HCT116 (cell line): ENCODE measurements at regions of chr19 and their contacts with region 1.

Region 1: GRCh38 chr19:57389730-57390598 is at the start of gene ZNF548:
- DNase-seq: peak; percentile 98
- ATAC-seq: peak; percentile 99
- H3K4me3 ChIP-seq: peak within 1 kb of the TSS; percentile 73 to 85
- H3K27ac ChIP-seq: peak within 1 kb of the TSS; percentile 61
- H3K4me1 ChIP-seq: peaks cover 6 to 16% of the 10 kb centered on the region in 2 experiments; a peak in 2 of 4 replicates
- H3K27me3 ChIP-seq: no peaks in the 10 kb centered on the region
- CTCF ChIP-seq: 0 out of 6 replicates have a peak, but pooled peaks of 1 of the 3 experiments have one; percentile 11
- POLR2A ChIP-seq: peak; percentile 39
- RAD21 ChIP-seq: no peak
- total RNA-seq, gene ZNF548: 8.7 TPM

Region 2: GRCh38 chr19:57362997-57363705 is 26.8 kb before region 1 on chr19 and contains the starts of genes TRAPPC2B and ZNF547:
- CTCF ChIA-PET with region 1: no interaction called
- POLR2A ChIA-PET with region 1: interaction called, 4 read pairs
- RAD21 ChIA-PET with region 1: no interaction called
- intact Hi-C with region 1: loop called (anchors 1 kb)
- DNase-seq: peak; percentile 99
- ATAC-seq: peak; percentile 94
- H3K4me3 ChIP-seq: peak within 1 kb of the TSS; percentile 76 to 86
- H3K27ac ChIP-seq: peak within 1 kb of the TSS; percentile 54
- H3K4me1 ChIP-seq: peaks cover 3 to 9% of the 10 kb centered on the region in 2 experiments; a peak in 3 of 4 replicates
- H3K27me3 ChIP-seq: no peaks in the 10 kb centered on the region
- CTCF ChIP-seq: no peak
- POLR2A ChIP-seq: peak; percentile 22
- RAD21 ChIP-seq: no peak
- total RNA-seq, gene TRAPPC2B: 3.9 TPM
- total RNA-seq, gene ZNF547: 1.4 TPM